ENCODE measurements at regions of chr3 and their contacts with region 1.

Region 1: GRCh38 chr3:99833617-99834205 is 16.0 kb downstream of the CMSS1 start:
- DNase-seq: no peak

Region 2: GRCh38 chr3:100254168-100254777 is 420.6 kb after region 1 on chr3:
- in situ Hi-C with region 1: loop called (anchors 10 kb)
- DNase-seq: peak; percentile 66

Region 3: DNA sequence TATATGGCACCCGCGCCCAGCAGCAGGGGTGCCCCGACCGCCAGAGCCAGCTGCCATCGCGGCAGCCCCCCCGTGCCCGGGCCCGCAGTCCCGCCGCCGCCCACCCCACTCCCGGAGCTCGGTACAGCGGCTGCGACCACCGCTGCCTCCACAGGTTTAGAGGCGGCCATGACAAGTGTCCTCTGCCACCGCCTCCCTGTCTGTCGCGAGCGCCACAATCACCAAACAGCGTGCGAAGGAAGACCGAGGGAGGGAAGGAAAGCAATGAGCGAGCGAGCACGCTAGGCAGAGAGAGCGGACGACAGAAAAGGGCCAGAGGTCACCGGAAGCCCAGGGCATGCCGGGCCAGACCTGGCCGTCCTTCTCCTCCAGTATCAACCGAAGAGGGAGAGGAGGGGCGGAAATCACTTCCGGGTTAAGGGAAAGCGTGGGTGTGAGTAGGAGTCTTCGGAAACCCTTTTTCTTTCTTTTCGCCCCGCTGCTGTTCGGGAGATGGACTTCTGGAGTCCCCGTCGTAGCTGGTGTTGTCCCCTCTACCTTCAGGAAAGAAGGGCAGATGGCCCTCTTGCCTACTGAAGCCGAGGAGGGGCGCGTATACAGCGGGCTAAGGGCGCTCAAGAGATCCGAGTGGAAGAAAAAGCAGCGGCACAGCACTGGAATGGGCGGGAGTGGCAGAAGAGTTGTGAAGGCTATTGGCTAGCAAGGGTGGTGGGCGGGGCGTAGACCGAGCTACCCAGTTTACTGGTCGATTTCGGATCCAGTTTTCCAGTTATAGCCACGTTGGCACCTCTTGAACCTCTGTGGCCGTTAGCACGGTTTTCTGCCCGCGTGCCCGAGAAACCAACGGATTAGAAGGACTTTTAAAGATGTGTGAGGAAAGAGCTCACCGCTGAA is 567.3 kb after region 1 on chr3 and contains the starts of genes LNP1 and TOMM70:
- in situ Hi-C with region 1: no loop called
- DNase-seq: peak; percentile 96

Measured in KBM-7 (cell line).